ENCODE measurements at regions of chr14 and their contacts with region 1.

Region 1: DNA sequence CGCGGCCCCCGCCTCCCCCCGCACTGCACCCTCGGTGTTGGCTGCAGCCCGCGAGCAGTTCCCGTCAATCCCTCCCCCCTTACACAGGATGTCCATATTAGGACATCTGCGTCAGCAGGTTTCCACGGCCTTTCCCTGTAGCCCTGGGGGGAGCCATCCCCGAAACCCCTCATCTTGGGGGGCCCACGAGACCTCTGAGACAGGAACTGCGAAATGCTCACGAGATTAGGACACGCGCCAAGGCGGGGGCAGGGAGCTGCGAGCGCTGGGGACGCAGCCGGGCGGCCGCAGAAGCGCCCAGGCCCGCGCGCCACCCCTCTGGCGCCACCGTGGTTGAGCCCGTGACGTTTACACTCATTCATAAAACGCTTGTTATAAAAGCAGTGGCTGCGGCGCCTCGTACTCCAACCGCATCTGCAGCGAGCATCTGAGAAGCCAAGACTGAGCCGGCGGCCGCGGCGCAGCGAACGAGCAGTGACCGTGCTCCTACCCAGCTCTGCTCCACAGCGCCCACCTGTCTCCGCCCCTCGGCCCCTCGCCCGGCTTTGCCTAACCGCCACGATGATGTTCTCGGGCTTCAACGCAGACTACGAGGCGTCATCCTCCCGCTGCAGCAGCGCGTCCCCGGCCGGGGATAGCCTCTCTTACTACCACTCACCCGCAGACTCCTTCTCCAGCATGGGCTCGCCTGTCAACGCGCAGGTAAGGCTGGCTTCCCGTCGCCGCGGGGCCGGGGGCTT is at the start of gene FOS:
- DNase-seq: peak; percentile 93
- H3K4me3 ChIP-seq: peak within 1 kb of the TSS; percentile 31 to 85 (median 68)
- H3K27ac ChIP-seq: peak within 1 kb of the TSS; percentile 92
- H3K4me1 ChIP-seq: peaks cover 11% of the 10 kb centered on the region
- H3K27me3 ChIP-seq: no peaks in the 10 kb centered on the region
- CTCF ChIP-seq: no peak
- POLR2A ChIP-seq: peak; percentile 98
- total RNA-seq, gene FOS: 9.2 and 63.2 TPM in 2 replicates

Region 2: GRCh38 chr14:75096959-75097358 is 181.6 kb before region 1 on chr14:
- CTCF ChIA-PET with region 1: no interaction called
- POLR2A ChIA-PET with region 1: no interaction called
- dilution Hi-C with region 1: no loop called
- intact Hi-C with region 1: no loop called
- DNase-seq: no peak
- H3K4me3 ChIP-seq: no peak overlapping the region
- H3K27ac ChIP-seq: no peak overlapping the region
- H3K4me1 ChIP-seq: no peaks in the 10 kb centered on the region
- H3K27me3 ChIP-seq: no peaks in the 10 kb centered on the region
- CTCF ChIP-seq: no peak
- POLR2A ChIP-seq: no peak

Region 3: GRCh38 chr14:75234173-75235115 is 44.1 kb before region 1 on chr14:
- CTCF ChIA-PET with region 1: no interaction called
- POLR2A ChIA-PET with region 1: interaction called, 4 read pairs
- dilution Hi-C with region 1: no loop called
- intact Hi-C with region 1: loop called (anchors 1 kb)
- DNase-seq: peak; percentile 92
- H3K4me3 ChIP-seq: no peak overlapping the region
- H3K27ac ChIP-seq: peak overlapping the region; percentile 91
- H3K4me1 ChIP-seq: peaks cover 23% of the 10 kb centered on the region
- H3K27me3 ChIP-seq: no peaks in the 10 kb centered on the region
- CTCF ChIP-seq: no peak
- POLR2A ChIP-seq: no peak

Region 4: DNA sequence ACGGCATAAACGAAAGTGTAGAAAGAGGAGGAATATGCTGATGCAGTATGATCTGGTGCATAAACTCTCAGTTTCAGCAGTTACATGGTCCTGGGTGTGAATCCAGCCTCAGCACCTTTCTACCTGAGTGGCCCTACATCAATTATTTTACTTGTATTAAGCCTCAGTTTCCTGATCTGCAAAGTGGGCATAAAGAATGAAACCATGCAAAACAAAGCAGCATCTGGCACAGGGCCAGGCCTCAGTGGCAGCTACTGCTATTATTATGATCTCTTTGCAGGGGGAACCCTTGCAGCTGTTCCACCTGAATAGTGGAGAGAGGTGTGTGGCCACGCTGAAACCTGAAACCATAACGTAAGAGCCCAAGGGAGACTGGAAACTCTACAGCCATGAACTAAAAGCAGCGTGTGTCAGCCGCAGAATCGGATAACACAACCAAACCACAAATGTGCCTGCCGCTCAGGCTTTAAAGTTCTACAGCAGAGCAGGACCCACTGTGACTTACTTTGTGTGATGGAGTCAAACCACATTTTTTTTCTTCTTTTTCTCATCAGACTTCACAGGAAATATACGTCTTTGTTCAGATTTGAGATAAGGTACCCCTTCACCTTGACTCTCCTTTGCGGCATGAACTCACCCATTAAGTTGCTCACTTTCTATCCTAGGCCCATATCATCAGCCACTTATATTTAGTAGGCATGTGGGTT is 29.2 kb before region 1 on chr14:
- CTCF ChIA-PET with region 1: no interaction called
- POLR2A ChIA-PET with region 1: interaction called, 11 read pairs
- dilution Hi-C with region 1: no loop called
- intact Hi-C with region 1: no loop called
- DNase-seq: no peak
- H3K4me3 ChIP-seq: no peak overlapping the region
- H3K27ac ChIP-seq: no peak overlapping the region
- H3K4me1 ChIP-seq: peaks cover 16% of the 10 kb centered on the region
- H3K27me3 ChIP-seq: no peaks in the 10 kb centered on the region
- CTCF ChIP-seq: no peak
- POLR2A ChIP-seq: no peak